HCT116 (cell line): ENCODE measurements at regions of chr9 and their contacts with region 1.

Region 1: GRCh38 chr9:83334320-83334719 is 203.9 kb downstream of the FRMD3 start:
- DNase-seq: peak; percentile 42
- ATAC-seq: peak; percentile 89
- H3K4me3 ChIP-seq: no peak overlapping the region
- H3K27ac ChIP-seq: no peak overlapping the region
- H3K4me1 ChIP-seq: peaks cover 4% of the 10 kb centered on the region in 2 experiments; a peak in 2 of 4 replicates
- H3K27me3 ChIP-seq: no peaks in the 10 kb centered on the region
- CTCF ChIP-seq: peak; percentile 81 to 99 (median 87); a peak in 5 of 6 replicates
- POLR2A ChIP-seq: no peak
- RAD21 ChIP-seq: peak; percentile 90

Region 2: GRCh38 chr9:82987370-82988189 is 346.7 kb before region 1 on chr9:
- CTCF ChIA-PET with region 1: no interaction called
- POLR2A ChIA-PET with region 1: no interaction called
- RAD21 ChIA-PET with region 1: no interaction called
- intact Hi-C with region 1: no loop called
- DNase-seq: no peak
- ATAC-seq: no peak
- H3K4me3 ChIP-seq: no peak overlapping the region
- H3K27ac ChIP-seq: no peak overlapping the region
- H3K4me1 ChIP-seq: no peaks in the 10 kb centered on the region
- H3K27me3 ChIP-seq: no peaks in the 10 kb centered on the region
- CTCF ChIP-seq: no peak
- POLR2A ChIP-seq: no peak
- RAD21 ChIP-seq: no peak

Region 3: DNA sequence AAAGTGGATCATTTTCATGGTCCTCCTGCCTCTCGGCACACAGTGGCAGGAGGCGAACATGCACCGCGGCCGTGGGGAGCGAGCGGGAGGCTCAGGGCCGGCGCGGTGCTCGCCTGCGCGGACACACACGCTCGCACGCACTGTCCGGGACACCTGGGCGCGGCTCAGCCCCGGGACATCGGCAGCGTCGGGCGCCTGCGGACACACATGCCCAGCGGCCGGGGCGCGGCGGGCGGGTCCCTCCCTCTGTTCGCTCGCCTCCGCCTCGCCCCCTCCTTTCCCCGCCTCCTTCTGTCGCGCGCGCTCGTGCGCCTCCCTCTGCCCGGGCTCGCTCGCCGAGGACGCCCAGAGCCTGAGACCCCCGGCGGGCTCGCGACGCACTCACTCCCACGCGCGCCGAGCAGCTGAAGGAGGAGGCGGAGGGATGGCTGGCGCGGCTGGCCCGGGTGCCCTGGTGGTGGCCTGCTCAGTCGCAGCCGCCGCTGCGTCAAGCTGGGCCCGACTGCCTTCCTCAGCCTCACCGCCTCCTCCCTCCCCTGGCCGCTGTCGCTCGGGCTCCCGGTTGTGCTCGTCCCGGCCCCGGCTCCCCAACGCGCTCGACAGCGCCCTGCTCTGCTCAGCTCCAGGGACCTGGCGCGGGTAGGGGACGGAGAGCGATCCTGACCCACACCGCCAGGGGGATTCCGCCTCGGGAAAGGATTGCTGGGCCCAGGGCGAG is 204.0 kb after region 1 on chr9 and contains the start of gene FRMD3:
- CTCF ChIA-PET with region 1: interaction called, 46 read pairs
- POLR2A ChIA-PET with region 1: interaction called, 3 read pairs
- RAD21 ChIA-PET with region 1: interaction called, 6 to 7 read pairs
- intact Hi-C with region 1: no loop called
- DNase-seq: peak; percentile 43
- ATAC-seq: peak; percentile 96
- H3K4me3 ChIP-seq: peak within 1 kb of the TSS; percentile 36 to 57
- H3K27ac ChIP-seq: peak within 1 kb of the TSS; percentile 37; the same call in 1 of the 2 replicates
- H3K4me1 ChIP-seq: peaks cover 5 to 13% of the 10 kb centered on the region in 2 experiments; a peak in 2 of 4 replicates
- H3K27me3 ChIP-seq: peaks cover 5% of the 10 kb centered on the region; the same call in 1 of the 2 replicates
- CTCF ChIP-seq: peak; percentile 62 to 82 (median 79)
- POLR2A ChIP-seq: no peak
- RAD21 ChIP-seq: peak; percentile 44
- total RNA-seq, gene FRMD3: 0.89 TPM

Region 4: DNA sequence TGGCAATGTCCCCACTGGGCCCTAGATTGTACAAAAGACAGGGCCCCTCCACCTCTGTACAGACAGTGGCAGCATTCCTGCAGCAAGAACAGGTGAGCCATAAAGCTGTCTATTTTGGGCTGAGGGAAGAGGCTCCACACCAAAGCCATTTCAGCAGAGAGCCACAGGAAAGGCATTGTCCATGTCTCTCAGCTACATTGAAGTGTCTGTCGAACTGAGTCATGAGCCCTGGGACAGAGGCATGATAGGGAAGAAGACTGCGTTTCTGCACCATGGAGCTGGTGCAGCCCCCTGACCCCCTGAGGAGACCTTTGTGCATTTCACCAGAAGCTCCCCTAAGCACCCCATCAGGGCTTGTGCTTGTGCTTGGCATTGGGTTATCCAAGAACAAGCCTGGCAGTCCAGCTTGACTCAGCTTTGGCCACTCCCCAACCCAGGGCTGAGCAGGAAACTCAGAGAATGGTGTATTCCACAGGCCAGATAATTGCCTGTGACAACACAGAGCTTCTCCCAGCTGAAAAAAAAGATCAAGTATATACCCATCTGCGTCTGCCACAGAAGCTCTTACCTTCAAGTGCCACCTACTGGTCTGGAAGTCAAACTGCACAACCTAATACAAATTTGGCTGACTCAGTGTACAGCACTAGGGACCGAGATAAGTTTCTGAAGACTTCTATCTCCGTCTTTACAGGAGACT is 209.8 kb after region 1 on chr9:
- CTCF ChIA-PET with region 1: interaction called, 46 read pairs
- POLR2A ChIA-PET with region 1: no interaction called
- RAD21 ChIA-PET with region 1: interaction called, 3 to 7 read pairs
- intact Hi-C with region 1: loop called (anchors 1 kb)
- DNase-seq: peak; percentile 42
- ATAC-seq: peak; percentile 99
- H3K4me3 ChIP-seq: no peak overlapping the region
- H3K27ac ChIP-seq: no peak overlapping the region
- H3K4me1 ChIP-seq: peaks cover 0 to under 1% of the 10 kb centered on the region in 2 experiments; a peak in 2 of 4 replicates
- H3K27me3 ChIP-seq: no peaks in the 10 kb centered on the region
- CTCF ChIP-seq: peak; percentile 56 to 78 (median 70); a peak in 5 of 6 replicates
- POLR2A ChIP-seq: no peak
- RAD21 ChIP-seq: peak; percentile 74

Region 5: DNA sequence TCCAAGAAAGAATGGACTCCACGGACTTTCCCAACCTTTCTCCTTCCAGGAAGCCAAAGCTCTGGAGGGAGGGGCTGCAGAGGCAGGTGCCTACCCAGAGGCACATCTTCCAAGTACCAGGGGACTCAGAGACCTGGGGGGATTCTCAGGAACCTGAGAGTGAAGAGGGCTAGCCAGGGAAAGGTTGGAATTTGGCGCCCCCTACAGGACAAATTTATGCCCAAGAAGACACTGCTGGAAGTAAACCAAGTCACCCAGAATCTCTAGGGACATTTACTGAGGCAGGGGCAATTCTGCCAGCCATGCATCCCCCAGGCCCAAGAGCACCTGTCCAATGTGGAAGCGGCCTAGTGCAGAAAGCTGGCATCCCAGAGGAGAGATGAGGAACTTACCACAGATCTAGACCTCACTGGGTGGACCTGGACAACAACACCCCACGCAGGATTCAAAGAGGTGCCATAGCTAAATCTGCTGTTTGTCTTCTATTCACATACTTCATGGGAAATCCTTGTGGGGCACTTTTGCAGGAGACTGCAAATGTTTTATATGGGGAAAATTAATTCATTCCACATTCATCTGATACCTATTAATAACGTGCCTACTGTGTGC is 262.7 kb after region 1 on chr9:
- CTCF ChIA-PET with region 1: interaction called, 19 read pairs
- POLR2A ChIA-PET with region 1: no interaction called
- RAD21 ChIA-PET with region 1: interaction called in 1 of 2 experiments, 3 read pairs
- intact Hi-C with region 1: loop called (anchors 1 kb)
- DNase-seq: peak; percentile 27
- ATAC-seq: peak; percentile 81
- H3K4me3 ChIP-seq: no peak overlapping the region
- H3K27ac ChIP-seq: no peak overlapping the region
- H3K4me1 ChIP-seq: no peaks in the 10 kb centered on the region
- H3K27me3 ChIP-seq: no peaks in the 10 kb centered on the region
- CTCF ChIP-seq: peak; percentile 48 to 86 (median 81); a peak in 5 of 6 replicates
- POLR2A ChIP-seq: no peak
- RAD21 ChIP-seq: peak; percentile 71

Region 6: DNA sequence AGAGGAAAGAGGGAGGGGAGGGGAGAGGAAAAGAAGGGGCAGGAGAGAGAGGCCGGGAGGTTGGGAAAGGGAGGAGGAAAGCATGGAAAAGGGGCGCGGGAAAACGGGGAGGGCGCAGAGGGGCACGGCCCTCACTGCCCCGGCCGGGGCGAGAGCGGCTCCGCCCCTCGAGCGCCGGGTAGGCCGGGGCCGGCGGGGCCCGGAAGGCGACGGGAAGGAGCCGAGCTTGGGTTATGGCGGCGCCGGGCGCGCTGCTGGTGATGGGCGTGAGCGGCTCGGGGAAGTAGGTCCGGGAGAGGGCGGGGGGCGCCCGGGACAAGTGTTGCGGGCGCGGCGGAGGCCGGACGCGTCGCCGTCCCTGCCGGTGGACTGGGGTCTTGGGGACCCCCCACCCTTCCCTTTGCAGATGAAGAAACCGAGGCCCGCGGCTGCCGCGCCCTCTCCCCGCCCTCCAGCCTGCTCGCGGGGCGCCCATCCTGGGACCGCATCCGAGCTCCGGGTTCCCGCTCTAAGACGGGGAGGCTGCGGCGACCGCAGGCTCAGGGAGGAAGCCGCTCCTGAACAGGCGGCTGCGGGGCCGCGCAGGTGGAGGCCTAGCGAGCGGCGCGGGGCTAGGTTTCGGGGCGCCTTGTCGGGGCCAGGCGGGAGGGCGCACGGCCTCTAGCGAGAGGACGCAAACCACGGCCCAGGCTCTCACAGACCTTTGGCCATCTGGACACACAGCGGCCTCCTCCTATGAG is 288.8 kb after region 1 on chr9 and contains the start of gene IDNK:
- CTCF ChIA-PET with region 1: interaction called, 12 read pairs
- POLR2A ChIA-PET with region 1: interaction called, 3 read pairs
- RAD21 ChIA-PET with region 1: no interaction called
- intact Hi-C with region 1: loop called (anchors 10 kb)
- DNase-seq: peak; percentile 10
- ATAC-seq: peak; percentile 85
- H3K4me3 ChIP-seq: peak within 1 kb of the TSS; percentile 63 to 76
- H3K27ac ChIP-seq: peak within 1 kb of the TSS; percentile 82
- H3K4me1 ChIP-seq: peaks cover 3 to 24% of the 10 kb centered on the region in 2 experiments; a peak in 3 of 4 replicates
- H3K27me3 ChIP-seq: no peaks in the 10 kb centered on the region
- CTCF ChIP-seq: no peak
- POLR2A ChIP-seq: peak; percentile 34
- RAD21 ChIP-seq: no peak
- total RNA-seq, gene IDNK: 3.3 TPM

Region 7: DNA sequence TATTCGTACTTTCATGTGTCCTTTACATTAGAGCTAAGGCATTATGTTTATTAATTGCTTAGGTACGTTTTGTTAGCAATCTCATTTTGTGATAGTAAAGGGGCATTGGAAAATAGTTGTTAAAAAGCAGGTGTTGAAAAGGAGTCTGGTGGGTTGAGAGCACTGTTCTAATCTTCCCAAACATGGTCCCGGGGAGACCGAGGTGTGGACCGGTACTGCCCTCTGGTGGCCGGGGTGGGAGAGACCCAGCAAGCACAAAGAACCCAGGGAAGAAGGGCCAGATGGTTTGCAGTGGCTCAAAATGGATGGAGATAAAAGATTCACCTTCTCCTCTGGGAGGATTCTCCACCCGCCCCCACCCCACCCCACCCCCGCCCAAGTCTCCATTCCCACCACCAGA is 314.8 kb after region 1 on chr9:
- CTCF ChIA-PET with region 1: interaction called, 20 read pairs
- POLR2A ChIA-PET with region 1: no interaction called
- RAD21 ChIA-PET with region 1: no interaction called
- intact Hi-C with region 1: loop called (anchors 1 kb)
- DNase-seq: peak; percentile 6
- ATAC-seq: peak; percentile 92
- H3K4me3 ChIP-seq: no peak overlapping the region
- H3K27ac ChIP-seq: no peak overlapping the region
- H3K4me1 ChIP-seq: no peaks in the 10 kb centered on the region
- H3K27me3 ChIP-seq: no peaks in the 10 kb centered on the region
- CTCF ChIP-seq: peak; percentile 36 to 83 (median 81); a peak in 5 of 6 replicates
- POLR2A ChIP-seq: no peak
- RAD21 ChIP-seq: peak; percentile 64

Region 8: DNA sequence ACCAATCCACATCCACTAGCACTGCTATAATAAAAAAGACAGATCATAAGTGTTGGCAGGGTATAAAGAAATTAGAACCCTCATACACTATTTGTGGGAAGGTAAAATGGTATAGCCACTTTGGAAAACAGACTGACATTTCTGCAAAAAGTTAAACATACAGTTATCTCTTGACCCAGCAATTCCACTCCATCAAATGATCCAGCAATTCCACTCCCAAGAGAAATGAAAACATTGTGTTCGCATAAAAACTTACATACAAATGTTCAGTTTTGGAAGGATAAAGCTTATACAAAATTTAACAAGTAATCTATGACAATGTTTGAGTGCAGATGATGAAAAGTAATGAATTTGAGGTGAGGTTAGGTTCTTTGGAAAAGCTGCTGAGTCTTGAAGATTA is 584.8 kb after region 1 on chr9:
- CTCF ChIA-PET with region 1: no interaction called
- POLR2A ChIA-PET with region 1: no interaction called
- RAD21 ChIA-PET with region 1: no interaction called
- intact Hi-C with region 1: loop called (anchors 10 kb)
- DNase-seq: no peak
- ATAC-seq: no peak
- H3K4me3 ChIP-seq: no peak overlapping the region
- H3K27ac ChIP-seq: no peak overlapping the region
- H3K4me1 ChIP-seq: peaks cover 6 to 16% of the 10 kb centered on the region in 2 experiments
- H3K27me3 ChIP-seq: no peaks in the 10 kb centered on the region
- CTCF ChIP-seq: no peak
- POLR2A ChIP-seq: no peak
- RAD21 ChIP-seq: no peak